ENCODE measurements at regions of chr1 and their contacts with region 1.

Region 1: DNA sequence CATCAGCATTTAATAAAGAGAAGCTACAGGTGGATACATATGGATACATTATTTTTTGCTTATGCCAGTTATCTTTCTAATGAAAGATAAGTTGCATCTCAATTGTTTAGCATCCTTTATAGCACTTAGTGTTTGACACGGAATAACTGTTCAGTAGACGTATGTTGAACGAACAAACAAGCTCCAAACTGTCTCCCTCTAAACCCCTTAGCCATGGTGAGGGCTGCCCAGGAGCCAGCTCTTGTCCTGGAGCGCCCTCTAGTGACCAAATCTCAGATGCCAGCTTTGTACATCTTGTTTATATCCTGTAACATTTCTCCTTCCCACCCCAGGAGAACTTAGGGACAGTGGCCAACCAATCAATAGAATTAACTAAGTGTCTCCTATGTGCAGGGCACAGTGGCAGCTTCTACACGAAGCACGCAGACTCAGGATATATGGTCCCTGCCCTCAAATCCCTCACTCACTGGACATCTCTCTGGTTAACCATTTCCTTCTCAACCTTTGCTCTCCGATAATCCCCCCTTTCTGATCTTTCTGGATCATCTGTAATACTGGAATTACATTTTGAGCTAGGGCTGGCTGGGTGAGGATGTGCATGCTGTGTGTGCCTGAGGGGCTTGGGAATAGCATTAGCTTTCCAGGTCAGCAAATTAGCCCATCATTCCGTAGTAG is 22.9 kb downstream of the KCNA10 start:
- DNase-seq: peak; percentile 92

Region 2: GRCh38 chr1:110203021-110203661 is 292.9 kb before region 1 on chr1:
- CTCF ChIA-PET with region 1: interaction called, 41 read pairs
- POLR2A ChIA-PET with region 1: interaction called, 4 read pairs
- DNase-seq: peak; percentile 75

Region 3: DNA sequence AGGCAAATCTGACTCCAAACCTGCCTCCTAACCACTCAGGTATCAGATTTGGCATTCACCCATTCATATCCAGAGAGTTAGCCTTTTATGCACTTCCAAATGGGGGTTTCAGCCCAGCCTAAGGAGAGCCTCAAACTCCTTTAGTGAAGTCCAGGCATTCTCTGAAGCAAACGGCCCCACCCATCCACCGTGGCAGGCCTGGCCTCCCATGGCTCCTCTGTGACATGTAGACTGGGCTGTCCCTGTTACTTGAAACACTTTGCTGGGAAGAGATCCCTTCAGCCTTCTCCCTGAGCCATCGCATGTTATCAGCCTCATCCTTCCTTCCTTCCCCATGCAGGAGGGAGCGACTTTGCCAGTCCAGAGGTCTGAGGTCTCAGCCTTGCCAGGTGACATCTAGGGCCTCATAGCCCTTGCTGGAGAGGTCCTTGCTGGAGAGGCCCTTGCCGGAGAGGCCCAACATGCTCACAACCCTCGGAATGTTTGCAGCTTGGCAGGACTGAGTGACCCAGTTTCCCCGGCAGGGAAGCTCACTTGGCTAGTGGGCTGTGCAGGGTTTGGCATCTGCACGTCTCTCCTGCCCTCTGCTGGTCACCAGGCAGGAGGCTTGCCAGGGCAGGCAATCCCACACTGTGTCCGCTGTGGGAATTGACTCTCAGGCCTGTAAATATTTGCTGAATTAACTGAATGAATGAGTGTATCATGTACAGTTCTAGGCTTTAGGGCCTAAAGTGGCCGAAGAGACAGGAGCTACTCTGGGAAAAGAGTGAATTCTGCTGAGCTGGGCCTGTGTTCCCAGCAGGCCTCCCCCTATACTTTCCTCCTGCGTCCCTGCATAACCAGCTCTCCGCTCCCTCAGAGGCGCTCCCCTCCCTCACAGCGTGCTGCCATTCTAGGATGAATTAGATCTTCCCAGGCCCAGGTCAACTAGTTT is 183.6 kb before region 1 on chr1:
- CTCF ChIA-PET with region 1: interaction called, 10 read pairs
- POLR2A ChIA-PET with region 1: no interaction called
- DNase-seq: peak; percentile 90

Region 4: GRCh38 chr1:110407260-110408210 is 88.5 kb before region 1 on chr1 and contains the start of gene LAMTOR5:
- CTCF ChIA-PET with region 1: interaction called, 17 read pairs
- POLR2A ChIA-PET with region 1: interaction called, 5 read pairs
- DNase-seq: peak; percentile 82

Region 5: DNA sequence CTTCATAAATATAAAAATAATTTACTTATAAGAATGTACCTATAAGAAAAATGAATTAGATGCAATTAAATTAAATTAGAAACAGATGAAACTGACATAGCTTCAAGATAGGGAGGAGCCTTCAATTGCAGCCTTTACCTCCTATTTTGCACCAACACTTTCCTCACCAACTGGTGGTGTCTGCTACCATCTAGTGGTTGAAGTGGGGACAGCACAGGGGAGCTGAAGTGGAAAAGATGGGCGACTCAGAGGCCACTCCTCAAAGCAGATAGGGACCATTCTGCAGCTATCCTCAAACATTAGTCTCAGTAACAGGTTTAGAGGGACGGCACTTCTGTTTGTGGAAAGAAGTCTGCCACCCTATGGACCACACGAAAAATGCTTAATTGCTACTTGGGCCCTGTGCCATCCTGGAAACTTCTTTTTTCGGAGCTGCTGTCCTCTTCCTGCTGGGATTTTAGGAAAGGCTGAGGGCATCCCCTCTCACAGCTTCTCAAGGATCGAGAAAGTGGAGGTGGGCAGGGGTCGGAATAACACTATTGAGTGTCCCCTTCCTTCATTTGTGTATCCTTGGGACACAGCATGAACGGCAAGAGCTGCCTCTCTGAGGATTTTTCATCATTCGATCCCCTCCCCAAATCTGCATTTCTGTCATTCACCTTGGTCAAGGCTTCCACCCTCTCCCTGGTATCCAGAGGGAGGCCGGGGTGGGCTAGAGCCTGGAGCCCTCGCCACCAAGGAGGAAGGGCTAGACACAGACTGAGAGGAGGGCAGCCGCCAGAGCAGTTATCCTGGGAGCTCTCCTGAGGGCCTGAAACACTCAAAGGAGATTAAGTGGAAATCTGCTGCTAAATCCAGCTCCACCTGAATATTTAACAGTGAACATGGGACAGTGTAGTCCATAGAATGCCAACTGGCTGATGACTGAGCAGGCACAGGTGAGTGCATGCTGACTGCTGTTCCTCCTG is 35.5 kb before region 1 on chr1:
- CTCF ChIA-PET with region 1: interaction called, 39 read pairs
- POLR2A ChIA-PET with region 1: interaction called, 4 read pairs
- DNase-seq: peak; percentile 86

Region 6: DNA sequence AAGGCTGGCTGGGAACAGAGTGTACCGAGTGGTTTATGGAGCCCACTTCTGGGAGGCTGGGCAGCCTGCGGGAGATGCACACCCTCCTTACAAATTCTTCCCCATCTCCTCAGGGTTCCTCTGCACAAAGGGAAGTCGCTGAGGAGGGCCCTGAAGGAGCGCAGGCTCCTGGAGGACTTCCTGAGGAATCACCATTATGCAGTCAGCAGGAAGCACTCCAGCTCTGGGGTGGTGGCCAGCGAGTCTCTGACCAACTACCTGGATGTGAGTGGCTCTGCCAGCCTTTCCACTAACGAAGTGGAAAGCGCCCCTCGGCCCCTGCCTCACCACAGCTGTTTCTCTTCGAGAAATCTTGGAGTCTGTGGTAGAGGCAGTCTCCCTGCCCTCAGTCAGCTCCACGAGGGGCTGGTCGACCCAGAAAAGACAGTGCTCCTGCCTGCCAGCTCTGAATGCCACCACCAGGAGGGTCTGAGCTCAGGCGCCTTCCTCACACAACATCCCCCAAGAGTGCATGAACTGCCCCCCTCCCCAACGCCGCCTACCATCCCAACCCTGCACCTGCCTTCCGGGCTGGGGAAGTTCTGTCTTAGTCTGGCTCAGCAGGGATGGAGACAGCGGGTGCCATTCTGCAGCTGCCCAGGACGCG is 13.3 kb before region 1 on chr1:
- CTCF ChIA-PET with region 1: interaction called, 16 read pairs
- POLR2A ChIA-PET with region 1: no interaction called
- DNase-seq: no peak

Measured in HEK293T (cell line).